Head of caudate nucleus (tissue), 42 donors: ENCODE measurements at regions of chr19 and their contacts with region 1.

Region 1: GRCh38 chr19:2475702-2476450 is at the start of gene GADD45B:
- DNase-seq: peak; percentile 95 to 100 (median 98)

Region 2: GRCh38 chr19:2282062-2282861 is 193.6 kb before region 1 on chr19 and contains the start of gene PEAK3:
- intact Hi-C with region 1: no loop called
- DNase-seq: peak in 35 of 42 donors; percentile 43 to 87 (median 69)

Region 3: DNA sequence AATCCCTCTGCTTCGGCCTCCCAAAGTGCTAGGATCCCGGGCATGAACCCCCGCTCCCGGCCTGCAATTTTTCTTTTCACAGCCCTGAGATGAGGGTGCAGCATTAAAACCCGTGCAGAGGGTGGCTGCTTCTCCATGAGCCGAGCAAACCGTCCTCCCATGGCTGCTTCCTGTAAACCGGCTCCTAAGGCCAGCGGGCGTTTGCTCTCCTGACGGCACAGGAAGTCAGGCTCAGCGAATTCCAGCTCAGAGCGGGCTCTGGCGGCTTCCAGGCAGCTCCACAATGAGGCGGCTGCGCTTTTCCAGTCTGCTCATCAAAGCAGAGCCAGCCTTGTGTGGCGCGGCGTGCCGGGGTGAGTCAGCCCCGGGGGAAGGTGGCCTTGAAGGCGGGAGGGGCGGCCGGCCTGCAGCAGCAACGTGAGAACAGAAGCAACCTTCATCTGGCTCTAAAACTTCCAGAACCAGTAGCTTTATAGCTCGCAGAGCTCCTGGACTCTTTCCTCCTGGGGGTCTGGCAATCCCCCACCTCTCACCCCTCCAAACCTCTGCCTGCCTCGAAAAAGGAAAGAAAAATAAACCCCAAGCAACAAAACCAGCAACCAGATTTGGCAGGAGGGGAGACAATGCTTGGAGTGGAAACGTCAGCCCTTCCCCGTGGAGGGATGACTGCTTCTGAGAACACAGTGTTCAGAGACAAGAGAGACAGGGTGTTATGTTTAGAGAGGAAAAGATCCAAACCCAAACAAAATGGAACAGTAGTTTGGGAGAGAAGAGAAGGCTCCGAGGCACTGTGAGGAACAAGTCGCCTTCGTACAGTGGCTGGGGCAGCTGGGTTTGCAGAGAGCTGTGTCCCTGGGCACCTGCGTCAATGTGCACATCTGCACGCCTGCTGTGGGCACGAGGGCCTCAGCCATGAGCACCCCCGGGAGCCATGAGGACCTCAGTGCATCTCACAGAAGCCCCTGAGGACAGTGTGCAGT is 67.9 kb after region 1 on chr19:
- intact Hi-C with region 1: loop called (anchors 5 kb)
- DNase-seq: peak; percentile 84 to 98 (median 94)

Region 4: GRCh38 chr19:2578901-2579677 is 103.2 kb after region 1 on chr19:
- intact Hi-C with region 1: loop called (anchors 5 kb)
- DNase-seq: peak; percentile 48 to 93 (median 82)

Region 5: DNA sequence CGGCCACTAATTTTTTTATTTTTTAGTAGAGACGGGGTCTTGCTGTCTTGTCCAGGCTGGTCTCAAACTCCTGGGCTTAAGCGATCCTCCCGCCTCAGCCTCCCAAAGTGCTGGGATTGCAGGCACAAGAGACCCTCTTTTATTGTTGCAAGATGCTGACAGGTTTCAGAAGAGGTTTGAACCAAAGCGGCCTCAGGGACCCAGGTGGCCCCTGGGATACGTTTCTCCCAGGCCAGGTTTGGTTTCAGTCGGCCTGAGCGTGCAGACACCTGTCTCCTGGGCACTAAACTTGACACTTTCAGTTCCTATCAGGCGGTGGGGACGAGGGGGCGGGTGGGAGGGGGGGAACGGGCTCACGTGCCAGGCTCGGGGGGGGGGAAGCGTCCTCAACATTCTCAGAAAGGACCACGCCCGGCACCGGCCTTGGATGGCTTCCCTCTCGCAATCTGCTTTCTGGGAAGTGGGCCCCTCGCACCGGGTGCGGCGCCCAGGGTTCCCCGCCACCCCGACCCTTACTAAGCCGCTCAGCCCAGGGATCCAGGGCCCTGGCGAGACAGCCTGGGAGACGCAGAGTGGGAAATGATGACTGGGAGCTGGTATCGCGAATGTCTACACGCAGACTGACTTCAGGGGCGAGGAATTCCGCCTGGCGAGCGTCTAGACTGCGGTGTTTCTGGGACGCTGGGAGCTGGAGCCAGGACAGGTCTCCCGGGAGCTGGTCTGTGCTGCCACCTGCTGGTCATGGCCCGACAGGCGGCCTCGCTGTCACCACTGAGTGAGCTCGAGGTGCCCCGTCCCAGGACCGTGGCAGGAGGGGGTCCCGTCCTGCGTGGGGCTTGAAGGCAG is 135.0 kb after region 1 on chr19:
- intact Hi-C with region 1: loop called (anchors 2 kb)
- DNase-seq: peak; percentile 72 to 97 (median 91)

Region 6: DNA sequence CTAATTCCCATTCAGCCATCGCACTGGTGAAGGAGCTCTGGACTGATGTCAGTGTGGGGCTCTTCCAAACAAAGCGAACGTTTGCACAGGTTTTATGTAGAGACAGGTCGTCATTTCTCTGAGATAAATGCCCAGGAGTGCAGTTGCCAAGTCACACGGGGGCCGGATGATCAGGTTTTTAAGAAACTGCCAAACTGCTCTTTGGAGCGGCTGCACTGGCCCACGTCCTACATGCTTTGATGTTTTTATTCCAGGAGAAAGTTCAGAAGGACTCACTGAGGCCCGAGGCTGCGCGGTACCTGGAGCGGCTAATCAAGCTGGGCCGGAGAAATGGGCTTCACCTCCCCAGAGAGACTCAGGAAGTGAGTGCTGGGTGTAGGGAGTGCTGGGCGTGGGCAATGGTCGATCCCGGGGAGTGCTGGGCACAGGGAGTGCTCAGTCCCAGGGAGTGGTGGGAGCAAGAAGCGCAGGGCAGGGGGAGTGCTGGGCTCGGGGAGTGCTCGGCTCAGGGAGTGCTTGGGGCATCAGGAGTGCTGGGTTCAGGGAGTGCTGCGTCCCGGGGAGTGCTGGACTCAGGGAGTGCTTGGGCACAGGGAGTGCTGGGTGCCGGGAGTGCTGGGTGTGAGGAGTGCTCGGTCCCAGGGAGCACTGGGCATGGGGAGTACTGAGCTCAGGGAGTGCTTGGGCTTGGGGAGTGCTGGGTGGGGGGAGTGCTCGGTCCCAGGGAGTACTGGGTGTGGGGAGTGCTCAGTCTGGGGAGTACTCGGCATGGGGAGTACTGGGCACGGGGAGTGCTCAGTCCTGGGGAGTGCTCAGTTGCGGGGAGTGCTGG is 320.2 kb after region 1 on chr19:
- intact Hi-C with region 1: no loop called
- DNase-seq: no peak